Kidney (tissue), 22 donors: ENCODE measurements at regions of chr9 and their contacts with region 1.

Region 1: DNA sequence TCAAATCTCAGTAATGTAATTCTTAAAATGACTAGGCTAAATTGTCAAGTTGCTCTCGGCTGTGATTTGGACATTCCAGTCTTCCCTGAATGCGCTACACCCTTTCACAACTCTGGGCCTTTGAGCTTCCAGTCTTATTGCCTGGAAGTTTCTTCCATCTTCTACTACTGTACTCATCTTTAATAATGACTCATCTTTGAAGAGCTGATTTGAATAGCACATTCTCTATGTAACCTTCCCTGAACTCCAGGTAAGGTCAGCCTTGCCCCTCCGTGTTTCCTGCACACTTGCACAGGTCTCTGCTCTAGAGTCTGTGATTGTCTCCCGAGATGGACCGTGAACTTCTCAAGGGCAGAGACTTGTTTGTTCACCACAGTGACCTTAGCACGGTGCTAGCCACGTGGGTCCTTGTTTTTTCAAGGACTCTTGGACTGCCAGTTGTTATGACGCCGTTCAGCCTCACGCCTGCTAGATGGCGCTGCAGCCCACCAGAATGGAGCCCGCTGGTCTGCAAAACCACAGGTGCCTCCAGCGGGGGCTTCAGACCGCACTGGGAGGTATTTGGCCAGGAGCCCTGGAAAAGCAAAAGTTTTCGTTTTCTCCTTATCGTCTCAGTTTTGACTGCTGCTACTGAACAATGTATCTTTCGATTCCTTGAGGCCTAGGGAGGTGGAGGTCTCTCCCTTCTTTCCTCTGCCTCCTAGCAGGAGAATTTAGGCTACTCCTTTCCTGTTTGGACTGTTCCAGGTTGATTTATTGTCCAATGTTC is 44.4 kb downstream of the SEC61B start:
- DNase-seq: peak; percentile 79 to 86 (median 85)
- H3K4me3 ChIP-seq: peak overlapping the region in 1 of 3 donors; percentile 6
- H3K27ac ChIP-seq: no peak overlapping the region
- H3K4me1 ChIP-seq: peaks cover 0 to 5% (median 0%) of the 10 kb centered on the region in 3 donors
- H3K27me3 ChIP-seq: no peaks in the 10 kb centered on the region
- CTCF ChIP-seq: peak; percentile 83

Region 2: GRCh38 chr9:99411083-99411796 is 144.8 kb after region 1 on chr9:
- intact Hi-C with region 1: no loop called
- DNase-seq: no peak
- H3K4me3 ChIP-seq: no peak overlapping the region
- H3K27ac ChIP-seq: no peak overlapping the region
- H3K4me1 ChIP-seq: no peaks in the 10 kb centered on the region
- H3K27me3 ChIP-seq: no peaks in the 10 kb centered on the region
- CTCF ChIP-seq: no peak

Region 3: GRCh38 chr9:99819856-99820684 is 553.6 kb after region 1 on chr9:
- intact Hi-C with region 1: loop called (anchors 10 kb)
- DNase-seq: peak; percentile 91 to 97 (median 95)
- H3K4me3 ChIP-seq: peak overlapping the region; percentile 78 to 97 (median 89)
- H3K27ac ChIP-seq: peak overlapping the region; percentile 93 to 99
- H3K4me1 ChIP-seq: peaks cover 5 to 23% (median 16%) of the 10 kb centered on the region in 3 donors
- H3K27me3 ChIP-seq: peaks cover 12% of the 10 kb centered on the region
- CTCF ChIP-seq: no peak